Sciatic nerve (tissue), 2 donors: ENCODE measurements at regions of chr11 and their contacts with region 1.

Region 1: DNA sequence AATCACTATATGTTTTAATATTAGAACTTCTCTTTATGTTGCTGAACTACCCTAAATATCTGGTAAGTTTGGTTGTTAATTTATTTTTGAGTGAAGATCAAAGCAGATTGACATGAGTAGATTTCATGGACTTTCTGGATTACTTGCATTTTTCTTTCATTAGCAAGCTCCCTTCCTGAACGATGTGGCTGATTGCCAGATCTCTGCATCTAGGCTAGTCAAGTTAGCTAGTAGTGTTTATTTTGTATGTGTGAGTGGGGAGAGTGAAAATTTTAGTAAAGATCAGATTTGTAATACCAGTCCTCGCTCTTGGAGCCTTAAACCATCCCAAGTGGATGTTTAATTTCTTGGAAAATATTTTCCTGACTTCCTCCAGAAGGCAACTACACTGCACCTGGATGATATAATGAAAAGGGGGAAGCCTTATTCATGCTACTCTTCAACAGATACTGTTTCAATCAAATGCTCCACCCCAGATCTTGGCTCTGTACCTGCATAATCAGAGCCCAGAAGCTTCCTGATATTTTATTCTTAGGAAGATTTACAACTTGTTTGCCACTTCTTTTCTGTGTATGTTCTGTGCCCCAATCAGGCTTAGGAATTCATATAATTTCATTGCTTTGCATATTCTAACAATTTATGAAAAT is 143.2 kb upstream of the GRIA4 start:
- DNase-seq: no peak
- ATAC-seq: no peak

Region 2: GRCh38 chr11:105297463-105297862 is 169.2 kb before region 1 on chr11:
- intact Hi-C with region 1: no loop called
- DNase-seq: no peak
- ATAC-seq: no peak

Region 3: GRCh38 chr11:105381941-105382340 is 84.8 kb before region 1 on chr11:
- intact Hi-C with region 1: no loop called
- DNase-seq: no peak
- ATAC-seq: no peak

Region 4: GRCh38 chr11:105399511-105399910 is 67.2 kb before region 1 on chr11:
- intact Hi-C with region 1: no loop called
- DNase-seq: no peak
- ATAC-seq: no peak

Region 5: DNA sequence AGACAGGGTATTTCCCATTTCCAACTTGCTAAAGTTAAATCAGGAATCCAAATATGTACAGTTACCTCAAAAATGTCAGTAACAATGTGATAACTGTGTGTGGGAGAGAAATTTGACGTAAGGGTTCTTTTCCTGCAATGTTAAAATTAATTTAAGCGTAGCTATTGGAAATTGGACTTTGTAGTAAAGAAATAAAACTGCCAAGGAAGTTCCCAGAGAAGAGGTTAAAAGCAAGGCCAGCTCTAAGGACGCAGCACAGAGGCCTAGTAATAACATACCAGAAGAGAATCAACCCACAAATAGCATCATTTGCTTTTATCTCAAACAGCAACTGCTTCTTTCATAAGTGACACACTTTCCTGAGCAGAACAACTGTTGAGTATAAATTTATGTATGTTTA is 106.4 kb after region 1 on chr11:
- intact Hi-C with region 1: no loop called
- DNase-seq: no peak
- ATAC-seq: no peak

Region 6: DNA sequence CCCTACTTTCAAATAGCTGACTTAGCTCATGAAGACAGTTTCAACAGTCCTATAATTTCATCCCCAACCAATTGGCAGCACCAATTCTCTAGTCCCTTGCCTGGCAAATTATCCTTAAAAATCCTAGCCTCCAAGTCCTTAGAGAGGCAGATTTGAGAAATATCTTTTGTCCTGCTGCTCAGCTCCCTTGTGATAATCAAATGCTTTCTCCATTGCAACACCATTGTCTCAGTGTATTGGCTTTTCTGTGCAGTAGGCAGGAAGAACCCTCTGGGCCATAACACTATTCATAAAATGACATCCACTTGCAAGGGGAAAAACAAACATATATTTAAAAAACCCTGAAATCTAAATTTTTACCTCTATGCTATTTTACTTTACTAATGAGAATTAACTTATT is 700.4 kb after region 1 on chr11:
- intact Hi-C with region 1: loop called (anchors 5 kb)
- DNase-seq: no peak
- ATAC-seq: no peak